ENCODE measurements at regions of chr9 and their contacts with region 1.

Region 1: DNA sequence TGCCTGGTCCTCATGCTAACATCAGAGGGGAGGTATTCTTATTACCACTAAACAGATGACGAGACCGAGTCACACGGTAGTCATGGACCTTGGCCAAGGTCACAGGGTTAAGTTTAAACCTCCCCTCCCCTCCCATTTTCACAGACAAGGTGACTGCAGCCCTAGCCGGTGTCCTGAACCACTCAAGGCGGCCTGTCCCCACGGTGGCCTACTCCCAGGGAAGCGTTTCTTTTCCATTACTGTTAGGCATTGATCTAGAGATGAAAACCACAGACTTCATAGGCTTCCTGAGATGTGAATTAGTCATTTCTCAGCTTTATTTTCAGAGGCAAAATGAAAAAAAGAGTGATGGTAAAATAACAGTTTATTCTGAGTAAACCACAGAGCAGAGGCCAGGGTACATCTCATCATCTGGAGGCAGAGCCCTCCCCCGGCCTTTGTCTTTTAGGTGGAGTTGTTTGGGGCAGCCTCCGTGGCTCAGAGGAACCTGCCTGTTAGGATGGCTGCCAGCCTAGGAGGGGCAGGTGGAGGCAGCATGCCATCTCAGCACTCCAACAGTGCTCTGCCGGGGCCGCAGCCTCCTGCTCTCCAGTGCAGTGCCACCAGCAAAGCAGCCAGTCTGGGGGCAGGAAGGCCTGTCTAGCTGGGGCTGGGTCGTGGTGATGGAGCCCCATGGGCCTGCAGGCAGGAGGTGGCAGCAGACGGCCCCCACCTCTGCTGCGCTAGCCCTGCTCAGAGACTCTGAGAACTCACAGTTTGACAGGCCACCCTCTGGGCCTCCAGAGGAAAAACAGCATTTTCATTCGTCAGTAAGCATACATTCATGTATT is 71.2 kb downstream of the RAPGEF1 start:
- DNase-seq: peak; percentile 46 to 86 (median 72)
- ATAC-seq: peak; percentile 68
- H3K4me3 ChIP-seq: peak overlapping the region; percentile 23
- H3K4me3 Mint-ChIP-seq: peak overlapping the region; percentile 64
- H3K27ac ChIP-seq: peak overlapping the region; percentile 89 to 92
- H3K27ac Mint-ChIP-seq: peak overlapping the region; percentile 96
- H3K4me1 ChIP-seq: peaks cover 87% of the 10 kb centered on the region
- H3K4me1 Mint-ChIP-seq: peaks cover 98% of the 10 kb centered on the region
- H3K27me3 ChIP-seq: no peaks in the 10 kb centered on the region
- H3K27me3 Mint-ChIP-seq: no peaks in the 10 kb centered on the region
- CTCF ChIP-seq: no peak

Region 2: DNA sequence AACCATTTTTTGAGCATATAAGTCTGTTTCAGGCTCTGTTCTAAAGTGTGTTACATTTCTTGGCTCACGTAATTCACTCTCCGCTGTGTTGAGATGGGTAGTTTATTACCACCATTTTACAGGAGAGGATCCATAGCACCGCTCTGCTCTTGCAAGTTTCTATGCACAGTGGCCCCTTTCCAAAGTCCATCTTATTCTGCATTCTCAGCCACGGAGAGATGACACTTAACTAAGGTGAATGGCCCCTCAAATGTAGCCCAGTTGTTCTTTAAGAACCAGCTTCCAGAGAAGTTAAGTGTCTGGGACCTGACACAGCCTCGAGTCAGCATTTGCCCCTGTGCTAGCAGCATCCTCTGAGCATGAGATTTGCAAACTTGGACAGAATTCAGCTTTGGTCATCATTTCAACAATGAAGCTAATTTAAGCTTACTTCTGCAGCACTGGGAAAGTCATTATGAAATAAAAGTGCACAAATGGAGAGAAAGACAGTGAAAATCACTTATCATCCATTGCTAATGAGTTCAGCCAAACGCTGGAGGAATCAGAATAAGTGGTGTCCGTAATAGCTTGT is 454.3 kb before region 1 on chr9:
- CTCF ChIA-PET with region 1: no interaction called
- POLR2A ChIA-PET with region 1: no interaction called
- intact Hi-C with region 1: no loop called
- DNase-seq: no peak
- ATAC-seq: no peak
- H3K4me3 ChIP-seq: no peak overlapping the region
- H3K4me3 Mint-ChIP-seq: no peak overlapping the region
- H3K27ac ChIP-seq: no peak overlapping the region
- H3K27ac Mint-ChIP-seq: no peak overlapping the region
- H3K4me1 ChIP-seq: no peaks in the 10 kb centered on the region
- H3K4me1 Mint-ChIP-seq: no peaks in the 10 kb centered on the region
- H3K27me3 ChIP-seq: no peaks in the 10 kb centered on the region
- H3K27me3 Mint-ChIP-seq: no peaks in the 10 kb centered on the region
- CTCF ChIP-seq: no peak

Region 3: GRCh38 chr9:131618071-131618479 is 50.6 kb before region 1 on chr9:
- CTCF ChIA-PET with region 1: no interaction called
- POLR2A ChIA-PET with region 1: no interaction called
- intact Hi-C with region 1: no loop called
- DNase-seq: no peak
- ATAC-seq: no peak
- H3K4me3 ChIP-seq: no peak overlapping the region
- H3K4me3 Mint-ChIP-seq: no peak overlapping the region
- H3K27ac ChIP-seq: no peak overlapping the region
- H3K27ac Mint-ChIP-seq: no peak overlapping the region
- H3K4me1 ChIP-seq: peaks cover 5% of the 10 kb centered on the region
- H3K4me1 Mint-ChIP-seq: peaks cover 9% of the 10 kb centered on the region
- H3K27me3 ChIP-seq: no peaks in the 10 kb centered on the region
- H3K27me3 Mint-ChIP-seq: no peaks in the 10 kb centered on the region
- CTCF ChIP-seq: no peak

Region 4: DNA sequence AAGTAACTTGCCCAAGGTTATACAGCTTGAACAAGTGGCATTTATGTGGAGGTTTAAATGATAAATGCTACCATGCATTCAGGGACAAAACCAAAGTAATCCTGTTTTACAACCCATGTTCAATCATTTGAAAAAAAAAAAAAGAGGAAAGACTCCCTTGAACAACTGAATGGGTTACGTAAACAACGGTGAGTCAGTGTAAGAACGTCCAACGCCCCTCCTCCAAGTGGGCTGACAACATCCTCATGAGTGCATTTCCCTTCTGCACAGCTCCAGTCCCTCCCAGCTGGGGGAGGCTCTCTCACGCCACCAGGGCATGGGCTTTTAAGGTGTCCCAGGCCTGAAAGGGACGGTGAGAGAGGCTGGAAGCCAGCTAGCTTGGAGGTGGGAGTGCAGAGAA is 33.4 kb before region 1 on chr9:
- CTCF ChIA-PET with region 1: interaction called, 7 read pairs
- POLR2A ChIA-PET with region 1: interaction called, 5 read pairs
- intact Hi-C with region 1: loop called in 1 of 2 experiments (anchors 2 kb)
- DNase-seq: peak; percentile 46 to 94 (median 74)
- ATAC-seq: peak; percentile 99
- H3K4me3 ChIP-seq: no peak overlapping the region
- H3K4me3 Mint-ChIP-seq: peak overlapping the region; percentile 54
- H3K27ac ChIP-seq: peak overlapping the region; percentile 62 to 81
- H3K27ac Mint-ChIP-seq: peak overlapping the region; percentile 98
- H3K4me1 ChIP-seq: peaks cover 20% of the 10 kb centered on the region
- H3K4me1 Mint-ChIP-seq: peaks cover 46% of the 10 kb centered on the region
- H3K27me3 ChIP-seq: no peaks in the 10 kb centered on the region
- H3K27me3 Mint-ChIP-seq: no peaks in the 10 kb centered on the region
- CTCF ChIP-seq: peak; percentile 13

Region 5: GRCh38 chr9:131656356-131657036 is 12.2 kb before region 1 on chr9:
- CTCF ChIA-PET with region 1: interaction called, 11 read pairs
- POLR2A ChIA-PET with region 1: interaction called, 5 read pairs
- intact Hi-C with region 1: loop called in 1 of 2 experiments (anchors 1 kb)
- DNase-seq: peak; percentile 58 to 92 (median 74)
- ATAC-seq: peak; percentile 81
- H3K4me3 ChIP-seq: no peak overlapping the region
- H3K4me3 Mint-ChIP-seq: peak overlapping the region; percentile 32
- H3K27ac ChIP-seq: peak overlapping the region; percentile 71 to 76
- H3K27ac Mint-ChIP-seq: peak overlapping the region; percentile 94
- H3K4me1 ChIP-seq: peaks cover 69% of the 10 kb centered on the region
- H3K4me1 Mint-ChIP-seq: peaks cover 73% of the 10 kb centered on the region
- H3K27me3 ChIP-seq: no peaks in the 10 kb centered on the region
- H3K27me3 Mint-ChIP-seq: no peaks in the 10 kb centered on the region
- CTCF ChIP-seq: no peak

Region 6: DNA sequence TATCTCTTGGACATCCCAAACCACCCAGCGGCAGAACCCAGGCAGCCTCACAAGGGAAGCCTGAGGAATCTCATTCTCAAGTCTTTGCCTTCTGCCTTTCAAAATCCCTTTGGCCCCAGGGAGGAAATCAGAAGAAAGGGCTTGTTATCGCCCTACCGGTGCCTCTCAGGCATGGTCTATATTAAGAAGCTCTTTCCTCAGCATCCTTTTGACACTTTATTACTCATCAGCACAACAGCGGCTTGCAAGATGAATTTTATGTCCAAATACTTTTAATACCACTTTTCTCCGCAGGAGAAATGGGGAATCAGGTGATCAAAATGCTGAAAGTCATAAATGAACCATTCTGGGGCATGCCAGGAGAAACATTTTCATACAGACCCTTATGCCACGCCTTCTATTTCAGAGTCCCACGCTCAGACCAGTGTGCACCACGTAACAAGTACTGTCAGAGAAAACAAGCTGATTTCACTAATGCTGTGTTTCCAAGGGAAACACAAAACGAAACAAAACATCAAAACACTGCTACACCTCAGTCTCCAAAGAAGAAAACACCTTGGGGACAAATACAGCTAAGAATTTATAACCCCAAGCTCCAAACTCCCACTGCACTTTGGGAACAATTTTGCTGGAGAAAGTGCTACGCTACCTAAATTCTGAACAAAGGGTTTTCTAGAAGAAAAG is 41.3 kb after region 1 on chr9:
- CTCF ChIA-PET with region 1: interaction called, 14 read pairs
- POLR2A ChIA-PET with region 1: interaction called, 5 read pairs
- intact Hi-C with region 1: no loop called
- DNase-seq: peak in 9 of 14 experiments; percentile 23 to 87 (median 35)
- ATAC-seq: peak; percentile 89
- H3K4me3 ChIP-seq: peak overlapping the region; percentile 3
- H3K4me3 Mint-ChIP-seq: peak overlapping the region; percentile 67
- H3K27ac ChIP-seq: peak overlapping the region; percentile 51 to 81
- H3K27ac Mint-ChIP-seq: peak overlapping the region; percentile 87
- H3K4me1 ChIP-seq: peaks cover 76% of the 10 kb centered on the region
- H3K4me1 Mint-ChIP-seq: peaks cover 86% of the 10 kb centered on the region
- H3K27me3 ChIP-seq: no peaks in the 10 kb centered on the region
- H3K27me3 Mint-ChIP-seq: no peaks in the 10 kb centered on the region
- CTCF ChIP-seq: no peak

Region 7: GRCh38 chr9:131739980-131740648 is 71.5 kb after region 1 on chr9 and contains the start of gene RAPGEF1:
- CTCF ChIA-PET with region 1: interaction called, 20 read pairs
- POLR2A ChIA-PET with region 1: interaction called, 3 read pairs
- intact Hi-C with region 1: no loop called
- DNase-seq: peak; percentile 57 to 91 (median 84)
- ATAC-seq: peak; percentile 57
- H3K4me3 ChIP-seq: peak within 1 kb of the TSS; percentile 85
- H3K4me3 Mint-ChIP-seq: peak within 1 kb of the TSS; percentile 95
- H3K27ac ChIP-seq: peak within 1 kb of the TSS; percentile 24
- H3K27ac Mint-ChIP-seq: peak within 1 kb of the TSS; percentile 92
- H3K4me1 ChIP-seq: peaks cover 69% of the 10 kb centered on the region
- H3K4me1 Mint-ChIP-seq: peaks cover 62% of the 10 kb centered on the region
- H3K27me3 ChIP-seq: no peaks in the 10 kb centered on the region
- H3K27me3 Mint-ChIP-seq: no peaks in the 10 kb centered on the region
- CTCF ChIP-seq: peak; percentile 66
- total RNA-seq, gene RAPGEF1: 130 to 134 TPM